H1 (cell line): ENCODE measurements at regions of chr12 and their contacts with region 1.

Region 1: GRCh38 chr12:65169320-65170208 is at the start of gene LEMD3:
- DNase-seq: peak; percentile 81 to 92
- H3K4me3 ChIP-seq: peak within 1 kb of the TSS; percentile 79 to 99 (median 92)
- H3K27ac ChIP-seq: peak within 1 kb of the TSS; percentile 91
- H3K4me1 ChIP-seq: peaks cover 0 to 2% (median 0%) of the 10 kb centered on the region in 4 experiments; a peak in 1 of 7 replicates
- H3K27me3 ChIP-seq: peaks cover 0 to 6% (median 0%) of the 10 kb centered on the region in 4 experiments; a peak in 3 of 7 replicates
- CTCF ChIP-seq: no peak
- EP300 ChIP-seq: peak in 1 of 2 experiments; percentile 59; a peak in 1 of 3 replicates
- POLR2A ChIP-seq: peak; percentile 92 to 97
- RAD21 ChIP-seq: no peak
- total RNA-seq, gene LEMD3: 31.7 and 33.2 TPM in 2 replicates

Region 2: GRCh38 chr12:65232476-65233077 is 63.0 kb after region 1 on chr12:
- CTCF ChIA-PET with region 1: interaction called, 10 read pairs
- POLR2A ChIA-PET with region 1: no interaction called
- DNase-seq: no peak
- H3K4me3 ChIP-seq: no peak overlapping the region
- H3K27ac ChIP-seq: no peak overlapping the region
- H3K4me1 ChIP-seq: no peaks in the 10 kb centered on the region
- H3K27me3 ChIP-seq: no peaks in the 10 kb centered on the region
- CTCF ChIP-seq: no peak; a peak in 1 of 4 replicates
- EP300 ChIP-seq: no peak
- POLR2A ChIP-seq: no peak
- RAD21 ChIP-seq: peak in 1 of 2 experiments; percentile 18; a peak in 2 of 4 replicates